T-cell (primary cell): ENCODE measurements at regions of chr12 and their contacts with region 1.

Region 1: DNA sequence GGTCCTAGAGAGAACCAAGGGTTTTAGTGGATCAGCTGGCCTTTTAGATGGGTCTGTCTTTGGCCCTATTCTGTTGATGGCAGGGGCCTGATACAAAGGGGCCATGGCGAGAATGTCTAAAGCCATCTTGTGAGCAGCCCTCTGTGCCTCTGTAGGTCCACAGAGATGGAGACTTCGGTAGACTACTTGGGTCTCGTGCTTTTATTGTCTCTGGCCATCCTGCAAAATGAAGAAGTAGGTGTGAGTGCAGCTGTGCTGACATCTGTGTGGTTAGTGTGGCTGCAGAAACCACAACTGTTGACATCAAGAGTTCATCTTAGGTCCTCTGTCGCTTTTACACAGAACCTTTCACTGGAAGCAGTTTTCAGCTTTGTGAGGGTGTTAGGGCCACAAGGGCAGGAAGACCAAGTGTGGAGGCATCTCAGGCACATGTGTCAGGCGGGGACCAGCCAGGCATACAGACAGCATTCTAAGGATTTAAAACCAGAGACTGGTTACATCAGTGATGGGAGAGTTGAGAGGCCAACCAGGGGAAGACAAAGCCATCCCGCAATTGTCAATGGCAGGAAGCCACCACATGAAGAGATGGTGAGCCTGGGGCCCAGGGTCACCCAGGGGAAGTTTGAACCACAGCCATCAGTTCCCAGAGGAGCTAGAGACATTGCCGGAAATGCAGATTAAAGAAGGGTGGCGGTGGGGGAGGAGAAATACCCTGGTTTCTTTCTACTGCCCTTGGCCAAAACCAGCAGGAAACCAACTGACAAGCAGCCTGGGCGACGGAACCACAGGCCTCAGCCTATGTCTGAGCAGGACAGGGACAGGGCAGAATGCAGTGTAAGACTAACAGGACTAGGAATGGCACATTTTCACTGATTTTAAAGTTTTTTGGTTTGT is 13.0 kb upstream of the TPCN1 start:
- DNase-seq: peak; percentile 5 to 88 (median 50)
- ATAC-seq: peak; percentile 74 to 82 (median 80)
- H3K4me3 ChIP-seq: no peak overlapping the region
- H3K4me3 Mint-ChIP-seq: peak overlapping the region; percentile 54 to 77 (median 59)
- H3K27ac ChIP-seq: peak overlapping the region; percentile 81
- H3K27ac Mint-ChIP-seq: peak overlapping the region; percentile 94 to 97
- H3K4me1 ChIP-seq: peaks cover 25 to 48% of the 10 kb centered on the region in 2 experiments
- H3K4me1 Mint-ChIP-seq: peaks cover 40 to 53% (median 46%) of the 10 kb centered on the region in 3 donors
- H3K27me3 ChIP-seq: no peaks in the 10 kb centered on the region
- H3K27me3 Mint-ChIP-seq: no peaks in the 10 kb centered on the region

Region 2: DNA sequence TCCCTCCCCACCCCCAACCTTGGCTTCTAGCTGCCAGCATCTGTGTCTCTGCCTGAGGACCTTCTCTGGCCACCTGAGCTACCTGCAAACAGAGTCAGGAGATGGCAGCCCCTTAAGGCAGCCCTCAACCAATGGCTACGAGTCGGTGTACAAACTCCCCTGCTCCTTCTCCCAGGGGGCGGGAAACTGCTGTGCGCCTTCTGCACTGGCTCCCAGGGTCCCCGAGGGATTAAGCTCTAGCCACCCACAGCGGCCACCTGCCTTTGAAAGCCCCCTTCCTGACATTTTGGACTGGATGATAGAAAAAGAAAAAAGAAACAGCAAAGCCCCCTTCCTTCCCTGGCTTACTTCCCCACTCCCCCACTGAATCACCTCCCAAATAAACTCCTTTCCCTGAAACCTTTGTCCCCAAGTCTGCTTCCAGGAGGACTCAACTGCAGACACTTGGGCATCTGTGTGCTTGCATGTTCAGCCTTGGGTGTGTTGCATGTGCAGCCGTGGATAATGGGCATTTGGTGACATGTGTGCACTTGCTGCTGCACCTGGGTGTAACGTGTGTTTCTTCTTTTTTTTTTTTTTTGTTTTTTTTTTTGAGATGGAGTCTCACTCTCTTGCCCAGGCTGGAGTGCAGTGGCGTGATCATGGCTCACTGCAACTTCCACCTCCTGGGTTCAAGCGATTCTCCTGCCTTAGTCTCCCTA is 189.4 kb after region 1 on chr12:
- CTCF ChIA-PET with region 1: no interaction called
- POLR2A ChIA-PET with region 1: interaction called in 1 of 2 experiments, 12 read pairs
- DNase-seq: no peak
- ATAC-seq: no peak
- H3K4me3 ChIP-seq: no peak overlapping the region
- H3K4me3 Mint-ChIP-seq: no peak overlapping the region
- H3K27ac ChIP-seq: no peak overlapping the region
- H3K27ac Mint-ChIP-seq: no peak overlapping the region
- H3K4me1 ChIP-seq: no peaks in the 10 kb centered on the region
- H3K4me1 Mint-ChIP-seq: no peaks in the 10 kb centered on the region
- H3K27me3 ChIP-seq: peaks cover 0 to 42% of the 10 kb centered on the region in 2 experiments
- H3K27me3 Mint-ChIP-seq: peaks cover 5 to 10% of the 10 kb centered on the region in 2 donors

Region 3: GRCh38 chr12:113479590-113480335 is 271.5 kb after region 1 on chr12:
- CTCF ChIA-PET with region 1: no interaction called
- POLR2A ChIA-PET with region 1: interaction called in 1 of 2 experiments, 10 read pairs
- DNase-seq: peak in 19 of 35 experiments; percentile 9 to 44 (median 24)
- ATAC-seq: peak in 1 of 4 experiments; percentile 31
- H3K4me3 ChIP-seq: no peak overlapping the region
- H3K4me3 Mint-ChIP-seq: peak overlapping the region in 1 of 3 donors; percentile 49
- H3K27ac ChIP-seq: no peak overlapping the region
- H3K27ac Mint-ChIP-seq: no peak overlapping the region
- H3K4me1 ChIP-seq: peaks cover 0 to 12% of the 10 kb centered on the region in 2 experiments
- H3K4me1 Mint-ChIP-seq: peaks cover 10 to 16% (median 15%) of the 10 kb centered on the region in 3 donors
- H3K27me3 ChIP-seq: peaks cover 8 to 62% of the 10 kb centered on the region in 2 experiments
- H3K27me3 Mint-ChIP-seq: peaks cover 71 to 84% of the 10 kb centered on the region in 2 donors